ENCODE measurements at regions of chr3 and their contacts with region 1.

Region 1: GRCh38 chr3:67704322-67704721 is 49.9 kb upstream of the SUCLG2 start:
- DNase-seq: peak; percentile 29 to 67 (median 57)
- ATAC-seq: peak; percentile 88 to 96 (median 92)
- H3K4me3 ChIP-seq: no peak overlapping the region
- H3K27ac ChIP-seq: no peak overlapping the region
- H3K4me1 ChIP-seq: peaks cover 0 to 16% (median 3%) of the 10 kb centered on the region in 4 donors
- H3K27me3 ChIP-seq: no peaks in the 10 kb centered on the region
- CTCF ChIP-seq: peak; percentile 39 to 55 (median 50)
- POLR2A ChIP-seq: no peak

Region 2: DNA sequence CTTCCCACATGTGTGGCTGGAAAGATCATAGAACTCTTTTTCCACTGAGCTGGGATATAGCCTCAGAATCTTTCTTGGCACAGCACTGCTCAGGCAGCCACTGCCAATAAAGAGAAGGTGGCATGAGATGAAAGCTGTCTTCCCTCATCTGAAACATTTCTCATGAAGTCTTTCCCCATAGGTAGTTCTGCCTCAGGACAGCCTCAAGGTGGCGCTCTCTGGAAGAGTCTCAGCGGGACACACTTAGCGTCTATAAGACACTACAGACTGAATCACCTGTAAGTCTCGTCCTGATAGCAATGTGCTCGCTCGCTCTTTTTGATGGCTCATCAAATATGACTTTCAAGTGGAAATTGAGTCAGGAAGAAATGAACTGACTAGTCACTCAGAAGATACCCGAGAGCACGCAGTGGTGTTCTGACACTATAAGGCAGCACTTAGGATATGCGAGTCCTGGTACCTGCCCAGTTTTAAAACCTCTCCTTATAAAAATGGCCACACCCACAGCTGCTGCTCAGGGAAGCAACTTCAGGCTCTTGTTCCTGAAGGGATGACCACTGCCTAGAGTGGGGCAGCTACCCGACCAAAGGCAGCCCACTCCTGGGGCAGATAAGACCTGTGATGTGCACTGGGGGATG is 319.4 kb before region 1 on chr3:
- intact Hi-C with region 1: loop called in 1 of 2 experiments (anchors 10 kb)
- DNase-seq: no peak
- ATAC-seq: peak; percentile 58 to 75 (median 68)
- H3K4me3 ChIP-seq: no peak overlapping the region
- H3K27ac ChIP-seq: no peak overlapping the region
- H3K4me1 ChIP-seq: no peaks in the 10 kb centered on the region
- H3K27me3 ChIP-seq: no peaks in the 10 kb centered on the region
- CTCF ChIP-seq: peak; percentile 22 to 48 (median 40)
- POLR2A ChIP-seq: no peak

Measured in right lobe of liver (tissue), 6 donors.